ENCODE measurements at regions of chr11 and their contacts with region 1.

Region 1: GRCh38 chr11:75867775-75868374 is 52.9 kb downstream of the UVRAG start:
- DNase-seq: no peak
- ATAC-seq: peak; percentile 63 to 67

Region 2: DNA sequence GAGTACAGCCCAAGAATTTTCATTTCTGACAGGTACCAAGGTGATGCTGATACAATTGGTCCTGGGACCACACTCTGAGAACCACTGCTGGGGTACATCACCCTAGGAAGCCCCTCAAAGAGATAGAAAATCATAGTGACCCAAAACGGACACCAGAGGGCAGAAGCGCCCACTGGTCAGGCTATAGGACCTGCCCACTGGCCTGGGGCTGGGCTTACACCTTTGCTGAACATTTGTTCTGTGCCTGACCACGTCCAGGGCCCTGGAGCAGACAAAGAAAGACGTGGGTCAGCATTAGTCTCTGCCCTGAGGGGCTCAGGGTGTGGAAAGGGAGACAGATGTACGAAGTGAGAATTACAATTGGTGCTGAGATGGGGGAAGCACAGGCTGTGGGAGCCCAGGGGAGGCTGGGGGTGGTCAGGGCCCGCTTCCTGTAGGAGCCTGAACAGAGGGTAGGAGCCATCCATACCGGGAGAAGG is 320.3 kb before region 1 on chr11:
- intact Hi-C with region 1: loop called in 1 of 2 experiments (anchors 5 kb)
- DNase-seq: peak; percentile 80
- ATAC-seq: peak; percentile 91 to 94

Region 3: DNA sequence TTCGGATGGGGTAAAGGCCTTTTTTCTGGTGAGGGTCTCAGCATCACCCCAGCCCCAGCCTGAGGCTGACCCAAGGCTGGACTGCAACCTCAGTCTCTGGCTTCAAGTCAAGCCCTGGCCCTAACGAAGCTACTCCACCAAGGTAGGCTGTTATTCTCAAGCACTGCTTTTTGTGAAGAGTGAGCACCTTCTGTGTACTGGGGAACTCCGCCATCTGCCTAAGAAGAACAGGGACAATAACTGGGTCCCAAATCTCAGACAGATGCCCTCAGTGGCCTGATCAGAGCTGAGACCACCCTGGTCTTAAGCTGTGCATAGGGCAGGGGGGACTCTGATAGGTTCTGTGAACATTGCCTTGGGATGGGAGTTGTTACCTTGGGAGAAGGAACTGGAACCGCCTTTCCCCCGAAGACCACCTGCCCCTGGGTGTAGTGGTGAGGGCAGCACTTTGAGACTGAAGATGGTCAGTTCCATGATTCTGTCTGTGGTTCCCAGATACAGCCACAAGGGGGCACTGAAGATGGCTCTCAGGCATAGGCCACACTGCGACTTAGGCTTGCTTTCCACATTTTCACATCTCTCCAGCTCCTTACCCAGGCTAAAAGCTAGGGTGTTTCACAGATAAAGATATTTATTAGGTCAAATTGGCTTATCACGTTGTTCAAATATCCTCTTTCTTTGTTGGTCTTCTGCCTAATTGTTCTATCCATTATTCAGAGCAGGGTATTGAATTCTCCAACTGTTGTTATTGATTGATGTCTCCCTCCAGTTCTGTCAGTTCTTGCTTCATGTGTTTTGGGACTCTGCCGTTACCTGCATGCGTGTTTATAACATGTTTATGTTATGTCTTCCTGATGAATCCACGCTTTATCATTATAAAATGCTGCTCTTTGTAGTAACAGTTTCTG is 64.7 kb before region 1 on chr11:
- intact Hi-C with region 1: loop called (anchors 1 to 5 kb)
- DNase-seq: peak; percentile 73
- ATAC-seq: peak; percentile 44 to 87

Region 4: DNA sequence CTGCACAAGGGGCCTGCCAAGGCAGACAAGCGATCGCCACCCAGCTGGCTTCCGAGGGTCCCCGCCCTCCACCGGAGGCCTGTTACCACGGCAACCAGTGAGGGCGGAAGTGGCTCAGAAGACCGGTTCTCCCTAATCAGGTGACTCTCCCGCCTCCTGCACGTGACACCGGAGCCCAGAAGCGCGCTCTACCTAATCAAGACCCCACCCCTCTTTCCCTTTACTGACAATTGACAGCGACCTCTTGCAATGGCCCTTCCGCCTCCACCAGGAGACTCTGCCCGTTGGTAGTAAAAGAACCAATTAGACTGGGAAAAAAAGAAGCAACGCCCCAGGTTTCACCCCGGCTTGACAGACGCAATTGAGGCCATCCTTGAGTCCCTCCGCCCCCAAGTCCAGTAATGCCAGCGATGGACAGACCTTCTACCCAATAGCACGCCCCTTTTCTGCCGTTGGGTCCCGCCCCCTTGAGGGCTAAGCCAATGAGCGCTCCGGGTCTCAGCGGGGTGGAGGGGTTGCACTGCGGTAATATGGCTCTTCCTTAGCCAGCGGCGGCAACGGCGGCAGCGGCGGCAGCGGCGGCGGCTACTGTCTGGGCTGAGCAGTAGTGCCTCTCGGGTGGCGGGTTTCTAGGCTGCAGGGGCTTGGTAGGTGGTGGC is 53.1 kb before region 1 on chr11 and contains the start of gene UVRAG:
- intact Hi-C with region 1: loop called in 1 of 2 experiments (anchors 5 kb)
- DNase-seq: peak; percentile 98
- ATAC-seq: peak; percentile 93 to 98
- total RNA-seq, gene UVRAG: 13.9 to 17.7 TPM

Region 5: GRCh38 chr11:77503015-77503414 is 1635.1 kb after region 1 on chr11:
- intact Hi-C with region 1: no loop called
- DNase-seq: no peak
- ATAC-seq: peak in 1 of 2 donors; percentile 44

Measured in left cardiac atrium (tissue), 4 donors.